Spleen (tissue), 13 donors: ENCODE measurements at regions of chr9 and their contacts with region 1.

Region 1: DNA sequence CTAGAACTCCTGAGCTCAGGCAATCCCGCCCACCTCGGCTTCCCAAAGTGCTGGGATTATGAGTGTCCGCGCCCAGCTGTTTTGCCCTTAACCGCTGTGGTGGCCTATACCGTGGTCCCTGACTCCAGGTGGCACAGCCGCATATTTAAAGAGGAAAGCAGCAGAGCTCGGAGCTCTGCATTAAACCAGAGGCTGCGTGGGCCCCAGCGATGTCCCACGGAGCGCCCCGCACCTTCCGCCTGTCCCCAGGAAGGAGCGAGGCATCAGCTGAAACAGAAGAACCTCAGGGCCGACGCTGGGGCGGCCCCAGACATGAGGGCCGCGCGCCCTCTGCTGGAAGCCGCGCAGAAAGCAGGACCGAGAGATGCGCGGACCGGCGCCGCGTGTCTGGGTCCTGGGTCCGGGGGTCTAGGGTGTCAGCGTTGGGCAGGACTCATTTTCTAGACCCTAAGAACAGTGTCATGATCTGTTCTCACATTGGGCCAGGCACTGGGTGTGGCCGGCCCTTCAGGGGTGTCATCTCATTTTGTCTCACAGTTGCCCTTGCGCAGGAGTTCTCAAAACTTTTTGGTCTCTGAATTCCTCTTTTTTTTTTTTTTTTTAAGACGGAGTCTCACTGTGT is 37.7 kb downstream of the LAMC3 start:
- DNase-seq: peak; percentile 92
- H3K4me3 ChIP-seq: peak overlapping the region in 1 of 8 donors; percentile 38
- H3K27ac ChIP-seq: no peak overlapping the region
- H3K4me1 ChIP-seq: peaks cover 0 to 31% (median 15%) of the 10 kb centered on the region in 6 donors
- H3K27me3 ChIP-seq: peaks cover 0 to 6% (median 0%) of the 10 kb centered on the region in 7 donors
- CTCF ChIP-seq: peak; percentile 60 to 93 (median 84)
- POLR2A ChIP-seq: no peak

Region 2: DNA sequence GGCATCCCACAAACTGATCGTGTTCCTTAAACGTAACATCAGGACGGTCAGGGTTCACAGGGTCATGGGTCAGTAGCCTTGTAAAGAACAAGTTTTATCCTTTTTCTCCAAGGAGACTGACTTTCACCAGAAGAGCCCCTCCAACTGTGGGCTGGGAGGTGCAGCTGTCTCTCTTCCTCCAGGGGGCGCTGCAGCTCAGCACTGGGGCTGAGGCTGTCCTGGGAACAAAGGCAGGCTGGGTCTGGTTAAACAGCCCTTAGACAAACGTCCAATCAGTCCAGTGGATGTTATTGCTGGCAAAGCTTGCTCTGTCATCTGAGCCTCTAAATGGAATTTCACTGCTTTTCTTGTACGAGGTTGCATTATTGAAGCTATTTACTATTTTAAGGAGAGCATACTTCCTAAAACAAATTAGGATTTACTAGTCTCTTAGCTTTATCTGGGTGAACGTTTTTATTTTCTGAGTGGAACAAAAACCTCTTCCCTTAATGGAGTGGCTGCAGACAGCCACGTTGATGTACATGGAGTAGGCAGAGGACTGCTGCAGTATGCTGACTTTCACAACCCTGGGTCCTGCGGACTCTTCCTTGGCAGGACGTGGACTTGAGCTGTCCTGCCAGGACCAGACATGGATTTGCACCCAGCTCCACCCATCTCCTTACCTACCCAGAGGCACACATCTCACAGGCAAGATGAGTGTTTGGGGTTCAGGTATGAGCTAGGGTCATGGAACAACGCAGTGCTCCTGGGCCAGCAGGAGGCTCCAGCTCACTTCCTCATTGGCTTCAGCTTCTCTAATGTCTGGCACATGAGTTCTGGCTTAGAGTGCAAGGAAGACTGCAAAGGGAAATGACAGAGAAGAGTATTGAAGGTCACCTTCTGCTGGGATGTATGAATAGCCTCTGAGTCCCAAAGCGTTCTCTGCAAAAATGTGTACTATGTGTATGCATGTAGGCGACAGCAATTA is 345.4 kb before region 1 on chr9:
- intact Hi-C with region 1: loop called (anchors 5 kb)
- DNase-seq: peak; percentile 88
- H3K4me3 ChIP-seq: no peak overlapping the region
- H3K27ac ChIP-seq: no peak overlapping the region
- H3K4me1 ChIP-seq: peaks cover 0 to 32% (median 1%) of the 10 kb centered on the region in 6 donors
- H3K27me3 ChIP-seq: no peaks in the 10 kb centered on the region
- CTCF ChIP-seq: peak; percentile 45 to 92 (median 84)
- POLR2A ChIP-seq: no peak

Region 3: DNA sequence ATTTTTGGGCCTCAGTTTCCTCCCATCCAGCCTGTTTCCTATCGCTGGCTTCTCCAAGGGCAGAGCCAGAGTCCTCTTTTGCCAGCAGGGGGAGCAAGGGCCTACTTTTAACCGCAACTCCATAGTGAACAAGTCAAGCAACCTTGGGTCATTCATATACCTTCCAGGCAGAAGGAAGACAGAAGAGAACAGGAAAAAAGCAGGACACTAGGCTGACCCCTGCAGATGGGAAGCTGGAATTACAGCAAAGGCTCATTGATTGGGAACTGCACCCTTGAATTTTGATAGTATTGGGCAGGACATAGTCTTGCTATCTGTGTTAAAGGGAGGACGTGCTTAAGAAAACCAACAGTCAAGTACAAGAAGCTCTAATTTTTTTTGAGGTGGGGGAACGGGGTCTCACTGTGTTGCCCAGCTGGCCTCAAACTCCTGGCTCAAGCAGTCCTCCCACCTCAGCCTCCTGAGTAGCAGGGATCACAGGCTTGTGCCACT is 180.2 kb before region 1 on chr9:
- intact Hi-C with region 1: loop called (anchors 5 kb)
- DNase-seq: peak; percentile 73
- H3K4me3 ChIP-seq: no peak overlapping the region
- H3K27ac ChIP-seq: no peak overlapping the region
- H3K4me1 ChIP-seq: peaks cover 0 to 40% (median 17%) of the 10 kb centered on the region in 6 donors
- H3K27me3 ChIP-seq: no peaks in the 10 kb centered on the region
- CTCF ChIP-seq: peak; percentile 61 to 85 (median 80)
- POLR2A ChIP-seq: no peak

Region 4: GRCh38 chr9:131125128-131126058 is 78.7 kb after region 1 on chr9 and contains the start of gene NUP214:
- intact Hi-C with region 1: loop called (anchors 10 kb)
- DNase-seq: peak; percentile 99
- H3K4me3 ChIP-seq: peak within 1 kb of the TSS; percentile 68 to 83 (median 77)
- H3K27ac ChIP-seq: peak within 1 kb of the TSS; percentile 61 to 93 (median 88)
- H3K4me1 ChIP-seq: peaks cover 11 to 57% (median 33%) of the 10 kb centered on the region in 6 donors
- H3K27me3 ChIP-seq: no peaks in the 10 kb centered on the region
- CTCF ChIP-seq: peak in 3 of 11 experiments; percentile 22 to 38 (median 27)
- POLR2A ChIP-seq: peak in 2 of 3 donors; percentile 50 to 70
- total RNA-seq, gene NUP214: 70.4 to 182 (median 140) TPM